Activated B cell treated with CpG ODN at 0.5 μM for 24 hours (primary cell): ENCODE measurements at regions of chr1 and their contacts with region 1.

Region 1: DNA sequence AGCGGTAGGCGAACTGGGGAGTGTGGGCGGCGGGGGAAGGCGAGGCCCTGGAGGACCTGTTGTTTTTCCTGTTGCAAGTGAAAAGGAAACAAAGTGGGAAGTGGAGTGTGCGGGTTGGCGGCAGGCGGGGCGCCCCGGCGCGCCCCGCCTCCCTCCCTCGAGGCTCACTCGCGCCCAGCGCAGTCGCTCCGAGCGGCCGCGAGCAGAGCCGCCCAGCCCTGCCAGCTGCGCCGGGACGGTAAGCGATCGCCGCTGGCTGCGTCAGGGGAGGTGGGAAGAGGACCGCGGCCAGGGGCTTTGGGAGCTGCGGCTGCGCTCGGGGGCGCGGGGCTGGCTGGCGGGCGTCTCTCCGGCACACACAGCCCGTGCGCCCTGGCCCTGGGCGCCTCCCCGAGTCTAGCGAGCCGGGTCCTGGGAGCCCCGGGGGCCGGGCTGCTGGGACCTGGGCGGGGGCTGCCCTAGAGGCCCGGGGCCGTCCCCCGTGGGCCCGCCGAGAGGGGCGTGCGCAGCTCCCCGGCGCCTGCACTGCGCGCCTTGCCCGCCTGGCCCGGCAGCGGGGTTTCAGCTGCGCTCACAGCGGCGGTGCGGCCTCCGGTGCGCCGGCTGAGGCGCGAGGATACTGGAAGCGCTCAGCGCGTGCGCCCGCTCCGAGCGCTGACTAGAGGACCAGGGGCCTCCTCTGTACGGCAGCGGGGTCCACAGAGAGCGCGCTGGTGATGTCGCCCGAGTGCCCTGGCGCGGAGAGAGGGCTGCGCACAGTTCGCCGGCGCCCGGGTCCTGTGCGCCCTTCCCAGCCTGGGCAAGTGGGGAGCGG is at the start of gene PIK3CD:
- DNase-seq: peak; percentile 50
- ATAC-seq: peak; percentile 11
- H3K4me3 Mint-ChIP-seq: peak within 1 kb of the TSS; percentile 96
- H3K27ac Mint-ChIP-seq: peak within 1 kb of the TSS; percentile 99
- H3K4me1 Mint-ChIP-seq: peaks cover 52% of the 10 kb centered on the region
- H3K27me3 Mint-ChIP-seq: no peaks in the 10 kb centered on the region
- CTCF ChIP-seq: no peak
- total RNA-seq, gene PIK3CD: 238 and 265 TPM in 2 replicates

Region 2: GRCh38 chr1:8871965-8872399 is 779.8 kb before region 1 on chr1:
- CTCF ChIA-PET with region 1: no interaction called
- POLR2A ChIA-PET with region 1: interaction called, 13 read pairs
- intact Hi-C with region 1: no loop called
- DNase-seq: no peak
- ATAC-seq: no peak
- H3K4me3 Mint-ChIP-seq: no peak overlapping the region
- H3K27ac Mint-ChIP-seq: no peak overlapping the region
- H3K4me1 Mint-ChIP-seq: peaks cover 58% of the 10 kb centered on the region
- H3K27me3 Mint-ChIP-seq: no peaks in the 10 kb centered on the region
- CTCF ChIP-seq: no peak

Region 3: GRCh38 chr1:9588551-9589143 is 63.1 kb before region 1 on chr1 and contains the start of gene TMEM201:
- CTCF ChIA-PET with region 1: interaction called, 3 read pairs
- POLR2A ChIA-PET with region 1: interaction called, 3 read pairs
- intact Hi-C with region 1: loop called (anchors 2 kb)
- DNase-seq: peak; percentile 98
- ATAC-seq: peak; percentile 91
- H3K4me3 Mint-ChIP-seq: peak within 1 kb of the TSS; percentile 84
- H3K27ac Mint-ChIP-seq: peak within 1 kb of the TSS; percentile 12
- H3K4me1 Mint-ChIP-seq: peaks cover 38% of the 10 kb centered on the region
- H3K27me3 Mint-ChIP-seq: no peaks in the 10 kb centered on the region
- CTCF ChIP-seq: no peak
- total RNA-seq, gene TMEM201: 8.1 and 9.4 TPM in 2 replicates

Region 4: GRCh38 chr1:9671377-9672140 is 19.8 kb after region 1 on chr1:
- CTCF ChIA-PET with region 1: interaction called, 4 read pairs
- POLR2A ChIA-PET with region 1: interaction called, 57 read pairs
- intact Hi-C with region 1: loop called (anchors 1 kb)
- DNase-seq: no peak
- ATAC-seq: no peak
- H3K4me3 Mint-ChIP-seq: no peak overlapping the region
- H3K27ac Mint-ChIP-seq: peak overlapping the region; percentile 57
- H3K4me1 Mint-ChIP-seq: peaks cover 67% of the 10 kb centered on the region
- H3K27me3 Mint-ChIP-seq: no peaks in the 10 kb centered on the region
- CTCF ChIP-seq: no peak

Region 5: DNA sequence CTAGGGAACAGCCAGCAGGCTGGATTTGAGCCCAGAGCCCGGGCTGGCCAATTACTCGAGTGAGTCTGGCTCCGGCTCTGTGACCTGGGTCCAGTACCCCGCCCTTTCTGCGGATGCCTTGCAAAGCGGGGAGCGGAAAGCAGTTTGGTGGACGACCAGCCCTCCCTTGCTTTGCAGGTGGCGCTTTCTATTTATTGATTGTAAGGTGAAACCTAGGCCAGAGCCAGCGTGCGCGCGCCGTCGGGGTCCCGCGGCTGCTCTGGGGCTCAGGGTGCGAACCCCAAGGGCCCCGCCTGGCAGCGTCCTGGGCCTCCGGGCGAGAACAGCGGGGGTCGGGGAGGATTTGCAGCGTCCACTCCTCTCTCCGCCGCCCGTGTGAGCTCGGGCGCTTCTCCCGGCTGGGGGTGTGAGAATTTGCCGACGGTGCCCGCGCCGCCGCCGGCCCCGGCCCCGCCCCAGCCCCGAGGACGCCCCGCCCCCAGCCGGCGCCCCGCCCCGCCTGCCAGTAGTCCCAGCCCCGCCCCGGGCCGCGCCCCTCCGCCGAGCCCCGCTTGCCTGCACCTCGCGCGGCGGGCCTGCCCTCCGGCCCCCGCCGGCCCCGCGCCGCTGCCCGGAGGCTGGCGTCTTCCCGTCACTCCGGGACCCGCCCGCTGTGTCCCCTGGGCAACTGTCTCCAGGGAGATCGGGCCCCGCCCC is 37.4 kb after region 1 on chr1:
- CTCF ChIA-PET with region 1: interaction called, 4 read pairs
- POLR2A ChIA-PET with region 1: interaction called, 126 read pairs
- intact Hi-C with region 1: loop called (anchors 1 kb)
- DNase-seq: peak; percentile 80
- ATAC-seq: peak; percentile 78
- H3K4me3 Mint-ChIP-seq: peak overlapping the region; percentile 82
- H3K27ac Mint-ChIP-seq: peak overlapping the region; percentile 87
- H3K4me1 Mint-ChIP-seq: peaks cover 68% of the 10 kb centered on the region
- H3K27me3 Mint-ChIP-seq: no peaks in the 10 kb centered on the region
- CTCF ChIP-seq: no peak

Region 6: DNA sequence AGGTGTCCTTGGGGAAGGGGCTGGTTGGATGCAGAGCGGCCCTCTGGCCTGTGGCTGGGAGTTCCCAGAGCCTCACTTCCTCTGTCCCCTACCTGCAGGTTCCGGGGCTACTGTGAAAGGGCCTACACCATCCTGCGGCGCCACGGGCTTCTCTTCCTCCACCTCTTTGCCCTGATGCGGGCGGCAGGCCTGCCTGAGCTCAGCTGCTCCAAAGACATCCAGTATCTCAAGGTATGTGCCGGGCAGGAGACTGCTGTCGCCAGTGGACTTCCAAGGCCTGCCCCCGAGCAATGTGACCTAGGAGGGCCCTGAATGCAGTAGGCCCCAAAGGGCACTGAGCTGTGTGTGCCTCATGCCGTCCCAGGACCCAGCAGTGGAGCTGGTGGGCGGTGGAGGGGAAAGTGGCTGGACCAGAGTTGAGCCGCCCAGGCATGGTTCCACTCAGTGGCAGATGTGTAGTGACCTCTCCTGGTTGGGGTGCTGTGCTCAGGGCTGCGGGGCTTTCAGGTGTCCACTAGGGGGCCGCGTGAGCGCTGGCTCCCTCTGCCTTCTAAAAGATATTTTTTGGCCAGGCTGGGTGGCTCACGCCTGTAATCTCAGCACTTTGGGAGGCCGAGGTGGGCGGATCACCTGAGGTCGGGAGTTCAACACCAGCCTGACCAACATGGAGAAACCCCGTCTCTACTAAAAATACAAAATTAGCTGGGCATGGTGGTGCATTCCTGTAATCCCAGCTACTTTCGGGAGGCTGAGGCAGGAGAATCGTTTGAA is 73.1 kb after region 1 on chr1:
- CTCF ChIA-PET with region 1: interaction called, 5 read pairs
- POLR2A ChIA-PET with region 1: interaction called, 13 read pairs
- intact Hi-C with region 1: no loop called
- DNase-seq: peak; percentile 62
- ATAC-seq: peak; percentile 70
- H3K4me3 Mint-ChIP-seq: no peak overlapping the region
- H3K27ac Mint-ChIP-seq: peak overlapping the region; percentile 74
- H3K4me1 Mint-ChIP-seq: peaks cover 21% of the 10 kb centered on the region
- H3K27me3 Mint-ChIP-seq: no peaks in the 10 kb centered on the region
- CTCF ChIP-seq: peak; percentile 62